ENCODE measurements at regions of chr3 and their contacts with region 1.

Region 1: GRCh38 chr3:159260049-159260662 is 458.3 kb downstream of the MFSD1 start:
- DNase-seq: peak in 1 of 3 donors; percentile 52
- ATAC-seq: peak; percentile 79 to 87 (median 81)
- H3K4me3 ChIP-seq: no peak overlapping the region
- H3K27ac ChIP-seq: no peak overlapping the region
- H3K4me1 ChIP-seq: no peaks in the 10 kb centered on the region
- H3K27me3 ChIP-seq: no peaks in the 10 kb centered on the region
- CTCF ChIP-seq: peak; percentile 69 to 78 (median 74)
- POLR2A ChIP-seq: no peak

Region 2: GRCh38 chr3:158842976-158843375 is 417.2 kb before region 1 on chr3:
- intact Hi-C with region 1: loop called in 1 of 2 experiments (anchors 5 kb)
- DNase-seq: no peak
- ATAC-seq: no peak
- H3K4me3 ChIP-seq: no peak overlapping the region
- H3K27ac ChIP-seq: no peak overlapping the region
- H3K4me1 ChIP-seq: peaks cover 0 to 12% (median 5%) of the 10 kb centered on the region in 4 donors
- H3K27me3 ChIP-seq: no peaks in the 10 kb centered on the region
- CTCF ChIP-seq: no peak
- POLR2A ChIP-seq: no peak

Region 3: GRCh38 chr3:158859362-158859761 is 400.8 kb before region 1 on chr3:
- intact Hi-C with region 1: loop called in 1 of 2 experiments (anchors 10 kb)
- DNase-seq: no peak
- ATAC-seq: no peak
- H3K4me3 ChIP-seq: no peak overlapping the region
- H3K27ac ChIP-seq: no peak overlapping the region
- H3K4me1 ChIP-seq: no peaks in the 10 kb centered on the region
- H3K27me3 ChIP-seq: no peaks in the 10 kb centered on the region
- CTCF ChIP-seq: no peak
- POLR2A ChIP-seq: no peak

Region 4: DNA sequence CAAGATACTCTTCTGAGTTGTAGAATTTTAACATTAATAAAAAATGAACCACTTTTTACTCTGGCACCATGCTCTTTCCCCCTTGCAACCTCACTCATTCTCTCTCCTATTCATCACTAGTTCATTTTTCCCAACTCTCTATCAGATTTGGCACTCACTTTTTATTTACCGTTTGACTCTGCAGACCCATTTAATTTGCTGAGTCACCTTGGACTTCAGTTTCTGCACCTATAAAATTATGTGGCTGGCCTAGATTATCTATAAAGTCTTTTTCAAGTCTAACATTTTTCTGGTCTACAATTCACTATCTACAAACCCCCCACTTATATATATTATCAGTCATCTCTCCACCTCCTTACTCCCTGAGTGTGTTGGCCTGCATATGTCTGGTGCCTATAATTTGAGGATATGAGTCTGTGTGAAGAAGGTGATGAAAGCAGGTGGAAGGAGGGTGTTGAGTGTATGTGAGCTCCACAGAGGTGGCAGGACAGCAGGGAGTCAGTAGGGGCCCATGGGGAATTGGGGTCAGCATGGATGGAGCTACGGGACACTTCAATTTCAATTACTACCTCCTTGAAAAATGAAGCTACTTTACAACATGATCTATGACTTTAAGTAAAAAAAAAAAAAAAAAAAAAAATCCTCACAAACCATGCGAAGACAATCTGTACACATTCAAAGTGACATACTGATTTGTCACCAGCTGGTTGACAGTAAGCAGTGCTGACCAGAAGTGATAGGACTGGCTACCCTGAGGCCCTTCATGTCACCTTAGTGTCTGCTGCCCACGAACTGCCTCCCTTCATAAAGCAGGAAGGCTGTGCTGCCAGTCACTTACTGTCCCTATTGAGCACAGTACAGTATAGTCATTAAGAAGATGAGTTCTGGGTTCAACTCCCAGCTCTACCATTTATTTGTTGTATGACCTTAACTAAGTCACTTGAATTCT is 394.3 kb after region 1 on chr3:
- intact Hi-C with region 1: no loop called
- DNase-seq: no peak
- ATAC-seq: peak; percentile 62 to 94 (median 82)
- H3K4me3 ChIP-seq: no peak overlapping the region
- H3K27ac ChIP-seq: no peak overlapping the region
- H3K4me1 ChIP-seq: peaks cover 0 to 15% (median 3%) of the 10 kb centered on the region in 4 donors
- H3K27me3 ChIP-seq: no peaks in the 10 kb centered on the region
- CTCF ChIP-seq: no peak
- POLR2A ChIP-seq: no peak

Region 5: DNA sequence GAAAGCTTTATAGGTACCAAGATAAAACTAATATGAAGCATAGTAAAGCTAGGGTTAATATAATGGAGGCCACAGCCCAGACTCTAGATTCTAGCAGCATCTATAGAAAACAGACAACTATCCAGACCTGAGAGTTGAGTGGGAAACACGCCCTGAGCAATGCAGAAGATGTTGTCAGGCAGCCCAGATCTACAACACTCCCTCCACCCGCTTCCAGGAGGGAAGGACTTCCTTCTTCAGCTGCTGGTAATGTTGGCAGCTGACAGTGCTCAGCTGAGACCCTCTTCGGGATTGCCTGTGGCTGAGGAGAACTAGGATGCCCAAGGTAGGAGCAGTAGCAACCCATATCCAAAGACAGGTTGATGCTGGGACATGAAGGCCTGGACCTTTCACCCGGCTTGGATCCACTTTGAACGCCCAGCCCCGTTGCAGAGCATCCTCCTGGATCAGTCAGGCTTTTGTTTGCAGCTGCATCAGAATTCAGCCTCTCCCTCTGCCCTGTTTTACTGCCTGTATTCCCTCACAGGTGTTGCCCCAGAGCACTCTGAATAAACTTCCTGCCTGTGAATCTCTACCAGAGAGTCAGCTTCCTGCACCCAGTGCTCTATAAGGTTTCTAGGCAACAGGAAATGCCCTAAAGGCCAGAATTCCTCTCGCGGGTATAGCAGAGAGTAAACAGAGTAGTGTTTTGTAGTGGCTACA is 553.8 kb after region 1 on chr3:
- intact Hi-C with region 1: loop called in 1 of 2 experiments (anchors 10 kb)
- DNase-seq: no peak
- ATAC-seq: peak in 1 of 4 donors; percentile 13
- H3K4me3 ChIP-seq: no peak overlapping the region
- H3K27ac ChIP-seq: no peak overlapping the region
- H3K4me1 ChIP-seq: peaks cover 0 to 20% (median 12%) of the 10 kb centered on the region in 4 donors
- H3K27me3 ChIP-seq: no peaks in the 10 kb centered on the region
- CTCF ChIP-seq: no peak
- POLR2A ChIP-seq: no peak